Cardiac septum (tissue), 1 donor: ENCODE measurements at regions of chr1 and their contacts with region 1.

Region 1: DNA sequence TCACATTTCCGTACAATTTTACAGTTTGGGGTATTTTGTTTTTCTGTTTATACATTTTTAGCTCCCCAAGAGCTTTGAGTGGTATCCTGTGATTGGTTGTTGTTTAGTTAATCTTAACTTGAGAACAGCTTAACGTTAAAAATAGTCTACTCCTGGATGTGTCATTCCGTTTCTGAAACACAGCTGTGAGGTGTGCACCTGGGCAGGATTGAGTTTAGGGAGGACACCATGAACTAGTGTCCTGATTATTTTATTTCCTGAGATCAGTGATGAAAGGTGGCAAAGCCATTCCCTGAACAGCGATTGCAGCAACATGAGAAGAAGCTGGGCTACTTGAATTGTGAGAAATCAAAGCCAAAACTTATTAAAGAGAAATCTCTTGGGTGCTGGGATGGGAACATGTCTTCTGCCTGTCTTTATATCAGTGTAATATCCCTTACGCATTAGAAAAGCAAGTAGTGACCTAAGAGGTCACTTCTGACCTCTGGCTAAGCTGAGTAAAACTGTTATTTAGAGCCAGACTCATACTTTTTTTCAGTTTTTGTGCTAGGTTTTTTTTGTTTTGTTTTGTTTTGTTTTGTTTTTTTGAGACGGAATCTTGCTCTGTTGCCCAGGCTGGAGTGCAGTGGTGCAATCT is 43.4 kb downstream of the ZBTB40 start:
- DNase-seq: no peak

Region 2: DNA sequence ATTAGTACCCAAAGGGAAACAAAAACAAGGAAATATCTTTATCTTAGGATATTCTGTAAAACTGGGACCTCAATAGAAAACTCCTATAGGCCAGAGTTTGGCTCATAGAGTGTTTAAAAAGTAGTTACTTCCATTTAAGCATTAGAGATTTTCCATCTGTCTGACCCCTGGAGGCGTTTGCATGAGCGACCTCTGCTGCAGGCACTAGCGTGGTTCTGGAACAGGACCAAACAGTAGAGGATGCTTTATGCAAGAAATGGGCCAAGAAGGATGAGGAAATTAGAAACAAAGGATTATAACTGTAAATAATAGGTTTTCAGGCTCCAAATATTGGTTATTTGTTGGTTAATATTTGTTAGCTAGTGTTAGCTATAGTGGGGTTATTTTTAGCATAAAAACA is 37.7 kb before region 1 on chr1:
- intact Hi-C with region 1: loop called (anchors 5 kb)
- DNase-seq: no peak